Activated CD4-positive, alpha-beta memory T cell treated with anti-CD3 and anti-CD28 coated beads for 36 hours (primary cell): ENCODE measurements at regions of chr10 and their contacts with region 1.

Region 1: DNA sequence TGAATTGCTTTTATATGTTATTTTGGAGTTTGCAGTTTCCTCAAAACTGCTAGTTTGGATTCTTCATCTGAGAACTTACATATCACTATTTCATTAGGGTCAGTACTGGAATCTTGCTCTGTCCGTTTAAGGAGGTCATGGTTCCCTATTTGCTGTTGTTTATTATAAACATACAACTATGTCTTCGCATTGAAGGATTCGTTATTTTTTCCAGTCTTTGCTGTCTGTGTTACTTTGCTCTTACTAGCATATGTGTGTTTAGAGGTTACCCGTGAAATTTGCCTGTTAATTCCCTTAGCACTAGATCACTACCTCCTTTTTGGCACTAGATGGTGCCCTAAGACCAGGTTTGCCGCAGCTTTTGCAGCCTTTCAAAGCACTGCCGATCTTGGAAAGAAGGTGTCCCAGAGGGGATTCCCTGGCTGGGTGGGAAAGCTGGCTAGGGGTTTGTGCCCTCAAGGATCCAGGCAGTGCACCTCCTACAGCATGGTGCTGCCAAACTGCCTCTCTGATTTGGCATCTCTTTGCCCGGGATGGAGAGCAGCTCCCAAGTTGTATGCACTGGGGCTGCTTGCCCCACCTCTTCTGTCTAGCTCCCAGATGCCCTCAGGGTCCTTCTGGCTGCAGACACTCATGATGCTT is 103.1 kb upstream of the APBB1IP start:
- DNase-seq: peak; percentile 73
- H3K4me3 Mint-ChIP-seq: peak overlapping the region; percentile 67
- H3K27ac Mint-ChIP-seq: peak overlapping the region; percentile 36
- H3K4me1 Mint-ChIP-seq: peaks cover 6% of the 10 kb centered on the region
- H3K27me3 Mint-ChIP-seq: no peaks in the 10 kb centered on the region

Region 2: DNA sequence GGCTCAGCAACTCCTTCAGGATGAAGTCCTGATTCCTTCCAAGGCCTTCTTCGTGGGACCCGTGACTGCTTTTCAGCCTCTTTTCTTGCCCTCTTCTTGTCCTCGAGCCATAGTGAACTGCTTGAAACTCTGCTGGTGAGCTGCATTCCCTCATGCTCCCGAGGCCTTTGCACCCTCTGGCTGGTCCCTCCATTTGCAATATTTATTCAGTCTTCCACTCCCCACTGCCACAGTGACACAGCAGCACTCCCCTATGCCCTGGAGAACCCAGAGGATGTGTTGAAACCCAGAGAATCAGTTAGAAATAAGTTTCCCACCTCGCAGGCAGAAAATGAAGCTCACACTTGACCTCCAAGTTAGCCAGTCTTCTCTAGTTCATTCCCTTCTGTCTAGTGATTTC is 140.8 kb before region 1 on chr10:
- CTCF ChIA-PET with region 1: no interaction called
- POLR2A ChIA-PET with region 1: no interaction called
- intact Hi-C with region 1: no loop called
- DNase-seq: no peak
- H3K4me3 Mint-ChIP-seq: no peak overlapping the region
- H3K27ac Mint-ChIP-seq: no peak overlapping the region
- H3K4me1 Mint-ChIP-seq: peaks cover 3% of the 10 kb centered on the region
- H3K27me3 Mint-ChIP-seq: peaks cover 6% of the 10 kb centered on the region

Region 3: GRCh38 chr10:26251925-26252324 is 83.1 kb before region 1 on chr10:
- CTCF ChIA-PET with region 1: no interaction called
- POLR2A ChIA-PET with region 1: no interaction called
- intact Hi-C with region 1: no loop called
- DNase-seq: no peak
- H3K4me3 Mint-ChIP-seq: no peak overlapping the region
- H3K27ac Mint-ChIP-seq: no peak overlapping the region
- H3K4me1 Mint-ChIP-seq: no peaks in the 10 kb centered on the region
- H3K27me3 Mint-ChIP-seq: peaks cover 2% of the 10 kb centered on the region

Region 4: GRCh38 chr10:26269754-26270153 is 65.3 kb before region 1 on chr10:
- CTCF ChIA-PET with region 1: no interaction called
- POLR2A ChIA-PET with region 1: no interaction called
- intact Hi-C with region 1: no loop called
- DNase-seq: no peak
- H3K4me3 Mint-ChIP-seq: no peak overlapping the region
- H3K27ac Mint-ChIP-seq: no peak overlapping the region
- H3K4me1 Mint-ChIP-seq: no peaks in the 10 kb centered on the region
- H3K27me3 Mint-ChIP-seq: peaks cover 13% of the 10 kb centered on the region

Region 5: GRCh38 chr10:26318672-26319071 is 16.4 kb before region 1 on chr10:
- CTCF ChIA-PET with region 1: no interaction called
- POLR2A ChIA-PET with region 1: no interaction called
- intact Hi-C with region 1: no loop called
- DNase-seq: no peak
- H3K4me3 Mint-ChIP-seq: no peak overlapping the region
- H3K27ac Mint-ChIP-seq: no peak overlapping the region
- H3K4me1 Mint-ChIP-seq: no peaks in the 10 kb centered on the region
- H3K27me3 Mint-ChIP-seq: peaks cover 4% of the 10 kb centered on the region

Region 6: DNA sequence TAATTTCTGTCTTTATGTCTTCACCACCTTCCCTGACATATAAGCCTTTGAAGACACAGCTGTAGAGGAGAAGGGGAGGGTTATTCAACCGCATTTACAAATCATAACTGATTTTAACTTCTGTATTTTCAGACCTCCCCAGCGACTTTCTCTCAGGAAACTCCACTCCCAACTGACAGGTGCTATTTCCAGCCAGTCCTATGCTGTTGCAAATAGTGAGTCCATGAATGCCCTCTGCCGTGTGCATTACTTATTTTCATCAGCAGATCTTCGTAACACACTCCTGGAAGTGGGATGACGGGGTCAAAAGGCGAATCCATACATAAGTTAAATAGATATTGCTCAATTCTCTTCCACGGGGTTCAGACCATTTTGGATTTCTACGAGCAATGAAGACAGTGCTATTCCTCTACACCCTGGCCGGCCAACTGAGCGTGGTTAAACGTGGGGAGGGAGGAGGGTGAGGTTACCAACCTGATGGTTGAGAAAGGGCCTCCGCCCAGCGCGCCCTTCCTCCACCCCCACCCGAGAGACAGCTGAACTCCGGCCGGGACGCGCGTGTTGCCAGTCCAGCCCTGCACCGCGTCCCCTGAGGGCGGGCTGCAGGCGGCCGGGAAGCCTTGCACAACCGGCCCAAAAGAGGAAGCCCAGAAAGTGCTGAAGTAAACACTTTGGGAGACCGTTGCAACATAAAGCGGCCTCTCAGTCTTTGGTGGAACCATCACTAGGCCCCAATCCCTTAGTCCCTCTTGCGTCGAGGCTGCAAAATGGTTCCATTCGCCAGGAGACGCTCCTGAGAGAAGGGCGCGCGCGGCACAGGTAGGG is 102.8 kb after region 1 on chr10 and contains the start of gene APBB1IP:
- CTCF ChIA-PET with region 1: interaction called, 6 read pairs
- POLR2A ChIA-PET with region 1: no interaction called
- intact Hi-C with region 1: loop called (anchors 2 kb)
- DNase-seq: peak; percentile 66
- H3K4me3 Mint-ChIP-seq: peak within 1 kb of the TSS; percentile 93
- H3K27ac Mint-ChIP-seq: peak within 1 kb of the TSS; percentile 92
- H3K4me1 Mint-ChIP-seq: peaks cover 51% of the 10 kb centered on the region
- H3K27me3 Mint-ChIP-seq: no peaks in the 10 kb centered on the region
- total RNA-seq, gene APBB1IP: 50.1 to 52.1 TPM

Region 7: DNA sequence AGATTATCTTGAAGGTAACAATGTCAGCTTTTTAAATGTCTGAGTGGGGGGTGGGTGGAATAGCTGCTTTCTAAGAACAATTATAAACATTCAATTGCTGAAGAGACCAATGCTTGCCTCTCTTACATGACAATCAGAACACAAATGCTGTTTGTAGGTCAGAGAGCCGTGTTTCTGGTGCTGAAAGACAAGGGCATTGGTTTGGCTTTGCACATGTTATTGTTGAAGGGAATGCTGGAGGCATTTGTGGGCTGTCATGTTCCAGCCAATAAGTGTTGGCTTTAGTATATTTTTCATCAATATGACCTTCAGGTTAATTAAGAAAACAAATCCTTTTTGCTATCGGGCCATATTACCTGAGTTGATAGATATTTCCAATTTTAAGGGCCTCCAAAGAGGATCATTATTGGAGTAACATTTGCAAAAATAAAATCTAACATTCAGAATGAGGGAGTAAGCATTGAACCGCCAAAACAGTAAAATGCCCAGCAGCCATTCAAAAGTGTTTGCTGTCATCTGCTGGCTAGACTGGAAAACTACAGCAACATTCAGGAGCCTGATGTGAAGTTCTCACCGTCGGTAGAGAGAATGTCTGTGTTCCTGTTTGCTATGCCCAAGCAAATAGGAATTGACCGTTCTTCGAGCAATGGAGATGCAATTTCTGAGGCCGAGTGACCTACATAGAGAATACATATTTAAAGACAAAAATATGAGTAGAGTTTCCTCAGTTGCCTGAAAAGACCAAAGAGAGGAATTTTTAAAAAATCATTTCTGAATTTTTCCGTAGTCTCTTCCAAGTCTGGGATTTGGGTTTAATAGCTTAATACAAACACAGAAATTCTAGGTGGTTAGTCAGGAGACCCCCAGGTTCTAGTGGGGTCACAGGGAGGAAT is 221.9 kb after region 1 on chr10:
- CTCF ChIA-PET with region 1: interaction called, 69 read pairs
- POLR2A ChIA-PET with region 1: no interaction called
- intact Hi-C with region 1: loop called (anchors 1 kb)
- DNase-seq: peak; percentile 37
- H3K4me3 Mint-ChIP-seq: no peak overlapping the region
- H3K27ac Mint-ChIP-seq: no peak overlapping the region
- H3K4me1 Mint-ChIP-seq: no peaks in the 10 kb centered on the region
- H3K27me3 Mint-ChIP-seq: no peaks in the 10 kb centered on the region

Region 8: DNA sequence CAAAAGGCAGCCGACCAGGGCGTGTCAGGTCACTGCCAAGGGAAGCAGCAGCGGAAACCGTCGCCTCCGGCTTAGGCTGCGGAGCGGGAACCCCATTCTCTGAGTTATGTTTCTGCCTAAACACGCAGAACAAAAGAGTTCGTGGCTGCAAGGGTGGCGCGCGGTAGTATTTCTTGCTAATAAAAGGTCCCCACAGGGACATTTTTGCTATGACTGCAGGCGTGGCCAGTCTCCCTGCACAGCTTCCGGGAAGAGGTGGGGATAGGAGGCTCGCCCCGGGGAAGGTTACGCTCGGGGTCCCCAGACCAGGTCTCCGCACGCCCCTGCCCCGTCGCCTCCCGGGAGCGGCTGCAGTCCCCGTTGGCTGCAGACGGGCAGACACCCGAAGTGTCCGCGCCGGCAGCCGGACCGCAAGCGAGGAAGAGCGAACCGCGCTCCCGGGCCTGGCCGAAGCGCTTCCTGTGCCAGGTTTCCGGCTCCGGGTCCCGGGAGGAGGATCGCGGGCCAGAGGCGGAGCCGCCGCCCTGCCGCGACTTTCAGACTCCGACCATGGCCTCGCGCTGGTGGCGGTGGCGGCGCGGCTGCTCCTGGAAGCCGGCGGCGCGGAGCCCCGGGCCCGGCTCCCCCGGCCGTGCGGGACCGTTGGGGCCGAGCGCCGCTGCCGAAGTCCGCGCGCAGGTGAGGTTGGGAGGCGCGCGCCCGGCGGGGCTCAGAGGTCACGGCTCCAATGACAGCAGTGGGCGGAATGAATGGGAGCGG is 362.3 kb after region 1 on chr10 and contains the start of gene PDSS1:
- CTCF ChIA-PET with region 1: interaction called, 3 read pairs
- POLR2A ChIA-PET with region 1: no interaction called
- intact Hi-C with region 1: loop called (anchors 5 kb)
- DNase-seq: peak; percentile 75
- H3K4me3 Mint-ChIP-seq: peak within 1 kb of the TSS; percentile 99
- H3K27ac Mint-ChIP-seq: peak within 1 kb of the TSS; percentile 92
- H3K4me1 Mint-ChIP-seq: peaks cover 25% of the 10 kb centered on the region
- H3K27me3 Mint-ChIP-seq: no peaks in the 10 kb centered on the region
- total RNA-seq, gene PDSS1: 12.9 to 15.4 TPM

Region 9: GRCh38 chr10:26881600-26882331 is 546.7 kb after region 1 on chr10:
- CTCF ChIA-PET with region 1: interaction called, 6 read pairs
- POLR2A ChIA-PET with region 1: no interaction called
- intact Hi-C with region 1: loop called (anchors 2 kb)
- DNase-seq: no peak
- H3K4me3 Mint-ChIP-seq: no peak overlapping the region
- H3K27ac Mint-ChIP-seq: no peak overlapping the region
- H3K4me1 Mint-ChIP-seq: no peaks in the 10 kb centered on the region
- H3K27me3 Mint-ChIP-seq: peaks cover 12% of the 10 kb centered on the region